Activated CD8-positive, alpha-beta T cell treated with anti-CD3 and anti-CD28 coated beads, Interleukin-2, amount 10 ng/mL, durations not matched to agents 7 days and 5 days (primary cell): ENCODE measurements at regions of chr12 and their contacts with region 1.

Region 1: GRCh38 chr12:89019408-89020120 is 332.7 kb downstream of the DUSP6 start:
- DNase-seq: peak; percentile 90
- ATAC-seq: peak; percentile 98
- H3K4me3 Mint-ChIP-seq: no peak overlapping the region
- H3K27ac Mint-ChIP-seq: no peak overlapping the region
- H3K4me1 Mint-ChIP-seq: peaks cover 40% of the 10 kb centered on the region
- H3K27me3 Mint-ChIP-seq: peaks cover 2% of the 10 kb centered on the region

Region 2: DNA sequence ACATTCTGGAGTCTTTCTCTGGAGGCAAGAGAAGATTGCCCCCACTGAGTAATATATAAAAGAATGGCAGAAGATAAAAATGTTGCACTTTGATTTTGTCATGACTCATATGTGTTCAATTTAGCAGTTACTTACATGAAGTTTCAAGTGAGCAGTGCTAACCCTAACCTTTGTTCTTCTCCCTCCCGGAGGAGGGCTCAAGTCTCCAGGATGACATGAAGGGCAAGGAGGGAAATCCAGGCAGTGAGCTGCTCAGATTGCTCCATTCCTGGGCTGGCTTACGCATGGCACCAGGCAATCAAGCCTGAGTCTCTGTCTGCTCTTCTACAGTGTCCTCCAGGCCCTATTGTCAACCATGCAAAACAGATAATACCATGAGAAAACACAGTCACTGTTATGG is 10.4 kb after region 1 on chr12:
- CTCF ChIA-PET with region 1: interaction called, 166 read pairs
- POLR2A ChIA-PET with region 1: no interaction called
- DNase-seq: no peak
- ATAC-seq: no peak
- H3K4me3 Mint-ChIP-seq: no peak overlapping the region
- H3K27ac Mint-ChIP-seq: no peak overlapping the region
- H3K4me1 Mint-ChIP-seq: peaks cover 56% of the 10 kb centered on the region
- H3K27me3 Mint-ChIP-seq: no peaks in the 10 kb centered on the region

Region 3: DNA sequence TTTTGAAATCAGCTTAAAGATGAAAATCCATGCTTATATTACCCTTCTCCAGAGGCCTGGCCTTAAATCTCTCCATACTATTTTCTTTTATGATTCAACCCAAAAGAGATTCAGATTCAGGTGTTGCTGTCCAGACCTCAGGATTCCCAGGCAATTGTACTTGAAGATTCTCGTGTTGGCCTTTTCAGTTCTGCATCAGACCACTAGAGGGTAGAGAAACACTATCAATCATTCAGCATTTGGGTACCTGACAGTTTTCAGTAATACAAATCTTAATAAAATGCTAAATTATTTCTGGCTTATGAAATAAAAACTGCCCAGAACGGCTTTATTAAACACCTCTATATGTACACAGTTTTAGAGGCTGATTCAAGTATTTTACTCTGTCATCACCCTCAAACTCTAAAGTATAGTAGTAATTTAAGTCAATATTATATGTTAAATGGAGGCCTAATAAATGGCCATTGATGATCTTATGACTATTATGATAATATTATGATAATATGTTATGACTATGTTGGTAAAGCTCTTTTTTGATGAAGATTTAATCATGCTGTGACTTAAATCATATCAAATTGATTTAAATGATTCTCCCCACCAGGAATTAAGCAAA is 31.6 kb after region 1 on chr12:
- CTCF ChIA-PET with region 1: interaction called, 18 read pairs
- POLR2A ChIA-PET with region 1: no interaction called
- DNase-seq: peak; percentile 55
- ATAC-seq: peak; percentile 77
- H3K4me3 Mint-ChIP-seq: no peak overlapping the region
- H3K27ac Mint-ChIP-seq: no peak overlapping the region
- H3K4me1 Mint-ChIP-seq: peaks cover 32% of the 10 kb centered on the region
- H3K27me3 Mint-ChIP-seq: no peaks in the 10 kb centered on the region

Region 4: DNA sequence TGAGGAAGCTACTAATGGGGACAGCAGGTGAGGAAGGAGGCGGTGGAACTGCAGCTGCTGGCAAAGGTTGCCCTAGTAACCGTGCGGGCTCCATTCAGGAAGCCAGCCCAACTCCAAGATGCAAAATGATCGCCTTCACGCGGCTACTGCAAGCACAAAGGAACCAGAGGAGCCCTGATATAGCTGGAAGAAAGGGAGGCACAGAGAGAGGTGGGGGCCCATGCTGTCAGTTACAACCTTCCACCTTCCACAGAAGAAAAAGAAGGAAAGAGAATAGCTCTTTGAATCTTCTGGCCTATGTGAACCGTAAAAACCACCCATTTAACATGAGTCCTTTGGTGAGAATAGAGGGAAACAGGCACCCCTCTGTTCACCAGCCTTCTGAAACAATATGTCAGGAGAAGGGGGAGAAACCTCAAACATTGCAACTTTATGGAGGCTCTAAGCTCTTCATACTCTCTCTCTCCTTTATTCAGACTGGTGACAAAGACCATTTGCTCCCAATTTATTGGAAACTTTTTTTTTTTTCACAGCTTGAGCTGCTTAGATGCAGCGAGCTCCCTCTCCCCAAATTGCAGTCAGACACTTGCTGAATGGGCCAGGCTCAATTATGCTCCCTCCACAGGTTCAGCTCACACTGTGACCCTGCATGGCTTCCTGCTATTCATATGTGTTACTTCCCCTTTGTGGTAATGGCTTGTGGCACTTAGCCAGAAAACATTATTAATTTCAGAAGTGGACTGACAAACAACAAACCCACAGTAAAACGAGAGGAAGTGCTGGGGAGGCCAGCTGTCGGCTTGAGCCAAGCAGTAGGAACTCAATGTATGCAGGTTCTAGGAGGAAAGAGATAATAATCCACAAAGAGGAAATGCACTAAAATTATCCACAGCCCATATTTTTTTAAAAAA is 326.5 kb after region 1 on chr12:
- CTCF ChIA-PET with region 1: interaction called, 53 read pairs
- POLR2A ChIA-PET with region 1: no interaction called
- DNase-seq: peak; percentile 76
- ATAC-seq: peak; percentile 70
- H3K4me3 Mint-ChIP-seq: peak overlapping the region; percentile 98
- H3K27ac Mint-ChIP-seq: peak overlapping the region; percentile 92
- H3K4me1 Mint-ChIP-seq: peaks cover 56% of the 10 kb centered on the region
- H3K27me3 Mint-ChIP-seq: no peaks in the 10 kb centered on the region

Region 5: GRCh38 chr12:89461649-89462612 is 442.4 kb after region 1 on chr12:
- CTCF ChIA-PET with region 1: interaction called, 167 read pairs
- POLR2A ChIA-PET with region 1: interaction called, 3 read pairs
- DNase-seq: no peak
- ATAC-seq: peak; percentile 87
- H3K4me3 Mint-ChIP-seq: peak overlapping the region; percentile 76
- H3K27ac Mint-ChIP-seq: peak overlapping the region; percentile 28
- H3K4me1 Mint-ChIP-seq: peaks cover 68% of the 10 kb centered on the region
- H3K27me3 Mint-ChIP-seq: no peaks in the 10 kb centered on the region

Region 6: DNA sequence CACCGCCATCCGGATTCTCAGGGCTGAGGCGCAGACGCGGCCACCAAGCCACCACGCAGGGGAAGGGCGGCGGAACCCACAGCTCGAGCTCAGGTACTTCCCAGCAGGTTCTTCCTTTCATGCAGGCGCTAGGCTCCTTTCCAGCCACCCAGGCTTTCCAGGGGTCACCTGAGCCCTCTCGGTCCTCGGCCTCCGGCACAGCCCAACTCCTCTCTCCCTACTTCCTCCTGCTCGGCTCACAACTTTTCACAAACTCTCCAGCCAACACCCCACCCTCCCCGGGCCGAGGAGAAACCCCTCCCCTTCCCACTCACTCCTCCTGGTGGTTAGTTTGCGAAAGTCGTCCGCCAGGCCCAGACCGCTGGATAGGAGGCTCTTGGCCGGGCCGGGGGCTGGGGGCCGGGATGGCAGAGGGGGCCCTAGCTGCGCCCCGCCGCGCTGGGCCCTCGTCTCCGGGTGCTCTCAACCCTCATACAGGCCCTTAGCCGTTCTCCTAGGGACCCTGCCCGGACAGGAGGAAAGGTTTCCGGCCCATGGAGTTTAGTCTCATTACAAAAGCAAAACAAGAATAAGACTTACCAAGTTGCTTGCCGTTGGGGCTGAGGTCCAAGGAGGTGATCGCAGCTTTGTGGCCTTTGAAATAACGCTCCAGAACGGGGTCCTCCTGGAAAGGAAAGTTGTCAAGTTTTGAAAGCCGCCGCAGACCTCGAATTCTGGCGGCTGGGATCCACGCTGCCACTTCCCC is 505.1 kb after region 1 on chr12 and contains the start of gene GALNT4:
- CTCF ChIA-PET with region 1: interaction called, 146 read pairs
- POLR2A ChIA-PET with region 1: interaction called, 4 read pairs
- DNase-seq: peak; percentile 86
- ATAC-seq: peak; percentile 78
- H3K4me3 Mint-ChIP-seq: peak within 1 kb of the TSS; percentile 89
- H3K27ac Mint-ChIP-seq: peak within 1 kb of the TSS; percentile 98
- H3K4me1 Mint-ChIP-seq: peaks cover 73% of the 10 kb centered on the region
- H3K27me3 Mint-ChIP-seq: no peaks in the 10 kb centered on the region
- total RNA-seq, gene GALNT4: 15.4 to 16.6 TPM